PC-3 (cell line): ENCODE measurements at regions of chrX and their contacts with region 1.

Region 1: DNA sequence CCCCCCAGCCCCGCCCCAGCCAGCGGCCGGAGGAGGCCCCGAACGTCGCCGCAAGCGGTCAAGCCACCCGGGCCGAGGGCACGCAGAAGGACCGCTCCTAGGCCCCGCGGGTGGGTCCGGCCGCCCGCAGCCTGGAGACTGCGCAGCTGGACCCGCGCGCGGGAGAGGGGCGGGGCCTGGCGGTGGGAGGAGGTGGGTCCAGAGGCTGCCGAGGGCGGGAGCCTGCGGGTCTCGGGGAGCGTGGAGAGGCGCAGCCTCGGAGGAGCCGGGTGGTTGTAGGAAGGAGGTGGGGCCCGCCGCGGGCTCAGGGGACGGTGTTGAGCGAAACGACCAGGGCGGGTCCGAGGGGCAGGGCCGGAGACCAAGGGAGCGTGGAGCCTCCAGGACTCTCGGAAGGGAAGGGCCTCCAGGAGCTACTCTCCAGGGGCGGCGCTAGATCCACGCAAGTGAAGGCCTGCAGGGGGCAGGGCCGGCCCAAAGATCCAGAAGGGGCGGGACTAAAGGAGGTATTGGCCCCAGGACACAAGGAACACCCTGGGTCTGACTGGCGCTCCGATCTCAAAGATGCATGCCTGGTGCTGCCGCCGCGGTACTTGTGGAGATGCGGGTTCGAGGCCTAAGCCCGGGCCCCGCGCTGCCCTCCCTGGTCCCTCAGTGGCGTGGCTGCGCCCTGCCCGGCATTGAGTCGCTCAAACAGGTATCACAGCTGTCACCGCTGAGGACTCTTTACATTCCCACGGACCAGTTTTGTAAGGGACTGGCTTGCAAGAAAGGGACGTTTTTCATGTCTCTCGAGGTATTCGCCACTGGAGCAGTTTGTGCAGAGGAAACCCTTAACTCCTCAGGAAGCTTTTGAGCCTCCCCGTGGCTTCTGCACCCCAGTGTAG is 5.9 kb downstream of the TIMM17B start:
- DNase-seq: peak; percentile 91
- ATAC-seq: peak; percentile 94
- H3K4me3 ChIP-seq: peak overlapping the region; percentile 64
- H3K27ac ChIP-seq: no peak overlapping the region
- H3K4me1 ChIP-seq: peaks cover 14% of the 10 kb centered on the region; the same call in 1 of the 2 replicates
- H3K27me3 ChIP-seq: no peaks in the 10 kb centered on the region
- CTCF ChIP-seq: peak; percentile 57

Region 2: GRCh38 chrX:48854898-48855297 is 36.7 kb before region 1 on chrX:
- CTCF ChIA-PET with region 1: interaction called, 3 read pairs
- POLR2A ChIA-PET with region 1: no interaction called
- intact Hi-C with region 1: loop called (anchors 2 kb)
- DNase-seq: peak; percentile 67
- ATAC-seq: peak; percentile 59
- H3K4me3 ChIP-seq: peak overlapping the region; percentile 35; the same call in 1 of the 2 replicates
- H3K27ac ChIP-seq: no peak overlapping the region
- H3K4me1 ChIP-seq: no peaks in the 10 kb centered on the region
- H3K27me3 ChIP-seq: no peaks in the 10 kb centered on the region
- CTCF ChIP-seq: peak; percentile 56

Region 3: GRCh38 chrX:48864210-48864609 is 27.4 kb before region 1 on chrX:
- CTCF ChIA-PET with region 1: no interaction called
- POLR2A ChIA-PET with region 1: no interaction called
- intact Hi-C with region 1: loop called (anchors 2 kb)
- DNase-seq: peak; percentile 42
- ATAC-seq: no peak
- H3K4me3 ChIP-seq: no peak overlapping the region
- H3K27ac ChIP-seq: no peak overlapping the region
- H3K4me1 ChIP-seq: peaks cover 20% of the 10 kb centered on the region
- H3K27me3 ChIP-seq: no peaks in the 10 kb centered on the region
- CTCF ChIP-seq: no peak